Adrenal gland (tissue), 19 donors: ENCODE measurements at regions of chr9 and their contacts with region 1.

Region 1: DNA sequence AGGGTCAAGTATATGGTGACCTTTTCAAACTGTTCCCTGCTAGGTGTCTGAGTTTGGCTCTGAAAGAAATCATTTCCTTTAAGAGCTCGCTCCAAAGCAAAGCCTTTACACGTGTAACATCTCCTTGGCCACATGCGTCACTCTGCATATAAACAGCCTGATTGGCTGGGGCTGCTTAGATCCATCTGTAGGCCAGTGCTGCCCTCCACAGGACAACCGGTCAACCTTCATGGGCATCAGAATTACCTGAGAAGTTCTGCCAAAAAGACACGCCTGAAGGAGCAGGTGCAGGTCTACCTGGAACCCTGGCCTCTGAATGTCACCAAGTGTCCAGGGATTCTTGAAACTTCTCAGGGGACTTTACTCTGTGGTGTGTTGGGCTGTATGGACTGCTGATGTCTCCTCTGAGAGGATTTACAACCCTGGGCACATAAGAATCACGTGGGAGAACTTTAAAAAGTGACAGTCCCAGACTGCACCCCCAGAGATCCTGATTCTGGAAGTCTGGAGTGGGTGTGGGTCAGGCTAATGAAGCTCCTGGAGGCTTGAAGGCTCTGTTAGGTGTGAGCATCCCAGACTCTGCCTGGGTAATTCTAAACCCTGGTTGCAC is 497.6 kb downstream of the GADD45G start:
- DNase-seq: peak; percentile 82 to 96 (median 93)
- H3K4me3 ChIP-seq: no peak overlapping the region
- H3K27ac ChIP-seq: no peak overlapping the region
- H3K4me1 ChIP-seq: peaks cover 23 to 25% of the 10 kb centered on the region in 2 donors
- H3K27me3 ChIP-seq: no peaks in the 10 kb centered on the region
- CTCF ChIP-seq: peak; percentile 61 to 96 (median 94)
- POLR2A ChIP-seq: no peak

Region 2: DNA sequence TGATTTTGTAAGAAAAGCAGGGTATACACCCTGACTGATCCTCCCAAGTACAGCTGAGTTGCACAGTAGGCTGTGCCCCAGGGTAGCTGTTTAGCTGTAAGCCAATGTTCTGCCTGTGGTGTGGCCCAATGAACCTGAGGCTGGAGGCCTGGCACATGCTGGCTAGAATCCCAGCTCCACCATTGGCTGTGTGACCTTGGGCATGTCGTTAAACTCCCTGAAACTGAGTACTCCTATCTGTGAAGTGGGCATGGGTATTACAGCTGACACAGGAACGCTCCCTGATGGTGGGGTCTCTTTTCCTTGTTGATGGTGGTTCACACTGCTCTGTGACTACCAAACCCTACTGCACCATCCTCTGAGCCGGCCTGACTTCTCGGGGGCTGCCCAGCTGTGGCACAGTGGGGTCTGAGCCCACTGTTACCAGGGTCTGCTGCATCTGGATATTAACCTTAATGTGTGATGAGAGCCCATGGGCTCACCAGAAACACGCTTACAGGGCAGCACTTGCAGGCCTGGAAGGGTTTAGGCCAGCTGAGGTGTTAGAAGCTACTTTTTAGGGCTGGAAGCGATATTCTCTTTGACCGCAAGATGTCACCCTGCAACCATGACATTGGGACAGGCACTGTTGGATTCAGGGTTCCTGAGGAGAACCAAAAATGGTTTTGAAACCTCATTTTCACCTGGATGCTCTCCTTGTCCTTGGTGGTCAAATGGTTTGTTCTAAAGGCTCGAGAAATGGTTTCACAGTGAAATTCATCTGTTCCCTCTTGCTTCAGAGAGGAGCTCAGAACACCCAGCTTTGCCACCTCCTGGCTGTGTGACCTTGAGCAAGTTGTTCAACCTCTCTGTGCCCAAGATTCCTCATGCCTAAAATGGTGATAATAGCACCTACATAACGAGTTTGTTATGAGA is 504.4 kb before region 1 on chr9:
- intact Hi-C with region 1: loop called (anchors 2 to 5 kb)
- DNase-seq: peak; percentile 41 to 88 (median 69)
- H3K4me3 ChIP-seq: no peak overlapping the region
- H3K27ac ChIP-seq: no peak overlapping the region
- H3K4me1 ChIP-seq: peaks cover 0 to 3% of the 10 kb centered on the region in 2 donors
- H3K27me3 ChIP-seq: no peaks in the 10 kb centered on the region
- CTCF ChIP-seq: peak; percentile 66 to 93 (median 89)
- POLR2A ChIP-seq: no peak

Region 3: DNA sequence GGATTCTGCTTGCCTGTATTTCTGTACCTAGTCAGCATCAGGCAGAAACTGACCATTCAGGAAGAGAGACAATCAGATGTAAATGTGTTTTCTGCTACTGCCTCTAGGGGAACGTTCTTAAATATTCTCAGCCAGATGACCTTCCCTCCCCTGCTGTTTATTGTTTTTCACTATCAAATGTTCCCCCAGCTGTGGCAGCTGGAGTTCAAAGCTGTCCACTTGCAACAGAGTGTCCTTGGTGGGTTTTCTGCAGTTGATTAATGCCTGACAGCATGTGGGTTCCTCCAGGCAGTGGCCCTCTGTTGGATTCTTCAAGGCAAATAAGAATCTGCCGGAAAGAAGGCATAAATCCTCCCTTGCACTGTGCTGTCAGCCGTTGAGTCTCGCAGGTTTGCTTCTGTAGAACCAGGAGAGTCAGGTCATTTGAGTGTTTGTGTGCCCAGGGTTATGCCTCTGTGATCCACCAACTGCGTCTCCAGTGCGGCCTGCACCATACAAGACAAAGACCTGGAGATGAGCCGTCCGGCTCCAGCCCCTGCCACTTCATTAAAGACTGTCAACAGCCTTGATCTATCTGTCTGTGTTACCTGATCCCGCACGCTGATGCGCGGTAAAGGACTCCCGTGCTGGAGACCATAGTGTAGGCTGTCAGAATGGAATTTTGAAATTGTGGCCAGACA is 294.2 kb before region 1 on chr9:
- intact Hi-C with region 1: loop called in 1 of 2 experiments (anchors 5 kb)
- DNase-seq: peak; percentile 66 to 91 (median 87)
- H3K4me3 ChIP-seq: no peak overlapping the region
- H3K27ac ChIP-seq: peak overlapping the region; percentile 37 to 95 (median 89)
- H3K4me1 ChIP-seq: peaks cover 18 to 24% of the 10 kb centered on the region in 2 donors
- H3K27me3 ChIP-seq: no peaks in the 10 kb centered on the region
- CTCF ChIP-seq: peak; percentile 32 to 74 (median 62)
- POLR2A ChIP-seq: peak in 1 of 2 donors; percentile 2

Region 4: GRCh38 chr9:89929673-89930480 is 172.5 kb before region 1 on chr9:
- intact Hi-C with region 1: loop called in 1 of 2 experiments (anchors 5 kb)
- DNase-seq: peak in 3 of 7 donors; percentile 33 to 62 (median 41)
- H3K4me3 ChIP-seq: no peak overlapping the region
- H3K27ac ChIP-seq: peak overlapping the region in 2 of 5 donors; percentile 17 to 75
- H3K4me1 ChIP-seq: peaks cover 0 to 20% of the 10 kb centered on the region in 2 donors
- H3K27me3 ChIP-seq: no peaks in the 10 kb centered on the region
- CTCF ChIP-seq: no peak
- POLR2A ChIP-seq: peak in 1 of 2 donors; percentile 8

Region 5: GRCh38 chr9:89999534-90000370 is 102.6 kb before region 1 on chr9:
- intact Hi-C with region 1: loop called in 1 of 2 experiments (anchors 10 kb)
- DNase-seq: peak; percentile 79 to 95 (median 91)
- H3K4me3 ChIP-seq: peak overlapping the region in 1 of 4 donors; percentile 36
- H3K27ac ChIP-seq: peak overlapping the region; percentile 87 to 95 (median 93)
- H3K4me1 ChIP-seq: peaks cover 46 to 54% of the 10 kb centered on the region in 2 donors
- H3K27me3 ChIP-seq: no peaks in the 10 kb centered on the region
- CTCF ChIP-seq: peak in 1 of 6 experiments; percentile 12
- POLR2A ChIP-seq: peak in 1 of 2 donors; percentile 71